CD14-positive monocyte (primary cell): ENCODE measurements at regions of chr9 and their contacts with region 1.

Region 1: DNA sequence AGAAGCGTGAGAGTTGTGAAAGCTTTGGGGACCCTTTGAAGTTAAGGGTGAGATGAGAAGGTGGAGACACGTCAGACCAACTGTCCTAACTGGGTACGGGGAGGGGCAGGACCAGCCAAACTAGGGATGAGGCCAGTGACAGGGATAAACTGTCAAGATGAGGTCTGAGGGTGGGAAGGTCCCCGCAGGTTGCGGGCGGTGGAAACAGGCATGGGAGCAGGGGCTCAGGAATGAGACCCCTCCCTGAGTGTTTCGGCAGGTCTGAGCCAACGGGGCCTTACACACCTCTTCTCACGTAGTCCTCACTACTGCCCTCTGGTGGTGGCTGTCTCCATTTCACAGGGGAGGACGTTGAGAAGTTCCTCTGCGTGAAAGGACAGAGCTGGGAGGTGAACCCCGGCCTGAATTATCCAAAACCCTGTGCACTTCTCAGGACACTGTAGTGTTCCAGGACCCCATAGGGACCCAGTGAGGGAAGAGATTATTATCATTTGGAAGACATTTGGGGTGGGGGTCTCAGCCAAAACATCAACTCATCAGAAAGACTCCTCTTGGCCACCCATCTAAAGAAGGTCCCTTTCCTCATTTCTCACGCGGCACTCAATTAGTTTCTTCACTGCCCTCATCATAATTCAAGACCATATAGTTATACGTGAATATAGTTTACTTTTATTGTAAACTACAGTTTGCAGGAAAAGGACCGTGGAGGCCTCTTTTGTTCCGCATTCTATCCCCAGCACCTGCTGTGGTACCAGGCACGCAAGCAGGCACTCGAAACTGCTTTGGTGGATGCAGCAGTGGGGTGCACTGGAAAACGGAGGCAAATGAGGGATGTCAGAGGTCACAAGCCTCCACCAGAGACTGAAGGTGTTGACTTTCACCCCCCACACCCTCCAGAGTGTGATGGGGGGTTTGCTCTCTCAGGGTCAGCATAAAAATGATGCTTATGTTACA is 21.7 kb upstream of the NANS start:
- DNase-seq: peak; percentile 76 to 84 (median 79)
- H3K4me3 ChIP-seq: no peak overlapping the region
- H3K4me3 Mint-ChIP-seq: peak overlapping the region; percentile 43 to 46
- H3K27ac ChIP-seq: no peak overlapping the region
- H3K27ac Mint-ChIP-seq: peak overlapping the region in 2 of 7 donors; percentile 26 to 80
- H3K4me1 ChIP-seq: peaks cover 4 to 6% of the 10 kb centered on the region in 2 donors
- H3K4me1 Mint-ChIP-seq: peaks cover 12% of the 10 kb centered on the region
- H3K27me3 ChIP-seq: no peaks in the 10 kb centered on the region
- H3K27me3 Mint-ChIP-seq: peaks cover 0 to 5% (median 2%) of the 10 kb centered on the region in 3 donors
- CTCF ChIP-seq: peak; percentile 91

Region 2: DNA sequence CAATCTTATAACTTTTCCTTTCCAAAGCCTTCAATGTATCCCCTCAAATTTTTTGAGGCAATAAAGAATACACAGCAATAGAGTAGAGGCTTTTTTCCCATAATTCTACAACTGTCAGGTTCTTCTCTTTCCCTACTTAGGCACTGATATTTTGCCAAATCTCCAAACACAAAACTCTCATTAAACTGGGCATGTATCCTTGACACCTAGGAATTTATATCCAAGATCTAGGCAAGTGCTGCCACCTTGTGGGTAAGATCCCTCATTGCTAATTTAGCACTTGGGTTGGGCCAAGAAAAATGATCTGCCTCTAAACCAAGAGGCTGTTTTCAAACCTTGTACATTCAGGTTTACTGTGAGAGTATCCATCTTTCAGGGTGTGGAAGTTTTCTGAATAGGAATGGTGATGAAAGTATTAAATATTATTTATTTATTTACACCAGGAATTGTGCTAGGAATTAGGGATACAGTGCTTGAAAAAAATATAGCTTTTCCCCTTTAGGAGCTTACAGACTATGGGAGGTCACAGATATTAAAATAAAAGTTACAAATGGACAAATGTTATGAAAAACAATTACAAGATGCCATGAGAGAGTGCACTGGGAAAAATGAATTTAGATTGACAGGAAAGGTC is 419.3 kb before region 1 on chr9:
- intact Hi-C with region 1: no loop called
- DNase-seq: peak; percentile 39 to 63 (median 58)
- H3K4me3 ChIP-seq: no peak overlapping the region
- H3K4me3 Mint-ChIP-seq: no peak overlapping the region
- H3K27ac ChIP-seq: no peak overlapping the region
- H3K27ac Mint-ChIP-seq: no peak overlapping the region
- H3K4me1 ChIP-seq: no peaks in the 10 kb centered on the region
- H3K4me1 Mint-ChIP-seq: peaks cover 3% of the 10 kb centered on the region
- H3K27me3 ChIP-seq: no peaks in the 10 kb centered on the region
- H3K27me3 Mint-ChIP-seq: peaks cover 0 to 2% (median 0%) of the 10 kb centered on the region in 3 donors
- CTCF ChIP-seq: peak; percentile 83

Region 3: GRCh38 chr9:97710356-97711222 is 324.3 kb before region 1 on chr9:
- intact Hi-C with region 1: loop called in 1 of 2 experiments (anchors 10 kb)
- DNase-seq: peak; percentile 48 to 65 (median 62)
- H3K4me3 ChIP-seq: no peak overlapping the region
- H3K4me3 Mint-ChIP-seq: peak overlapping the region in 1 of 2 donors; percentile 68
- H3K27ac ChIP-seq: no peak overlapping the region
- H3K27ac Mint-ChIP-seq: no peak overlapping the region
- H3K4me1 ChIP-seq: peaks cover 0 to 4% of the 10 kb centered on the region in 2 donors
- H3K4me1 Mint-ChIP-seq: peaks cover 7% of the 10 kb centered on the region
- H3K27me3 ChIP-seq: peaks cover 26 to 46% of the 10 kb centered on the region in 2 donors
- H3K27me3 Mint-ChIP-seq: peaks cover 21 to 57% (median 30%) of the 10 kb centered on the region in 3 donors
- CTCF ChIP-seq: peak; percentile 86

Region 4: GRCh38 chr9:97890038-97890437 is 144.8 kb before region 1 on chr9:
- intact Hi-C with region 1: loop called in 1 of 2 experiments (anchors 10 kb)
- DNase-seq: peak; percentile 46 to 59 (median 49)
- H3K4me3 ChIP-seq: no peak overlapping the region
- H3K4me3 Mint-ChIP-seq: no peak overlapping the region
- H3K27ac ChIP-seq: no peak overlapping the region
- H3K27ac Mint-ChIP-seq: no peak overlapping the region
- H3K4me1 ChIP-seq: no peaks in the 10 kb centered on the region
- H3K4me1 Mint-ChIP-seq: peaks cover 3% of the 10 kb centered on the region
- H3K27me3 ChIP-seq: no peaks in the 10 kb centered on the region
- H3K27me3 Mint-ChIP-seq: peaks cover 0 to 10% (median 4%) of the 10 kb centered on the region in 3 donors
- CTCF ChIP-seq: peak; percentile 85

Region 5: GRCh38 chr9:97990266-97990665 is 44.6 kb before region 1 on chr9:
- intact Hi-C with region 1: loop called in 1 of 2 experiments (anchors 5 kb)
- DNase-seq: no peak
- H3K4me3 ChIP-seq: no peak overlapping the region
- H3K4me3 Mint-ChIP-seq: no peak overlapping the region
- H3K27ac ChIP-seq: peak overlapping the region in 1 of 2 donors; percentile 55
- H3K27ac Mint-ChIP-seq: peak overlapping the region in 3 of 7 donors; percentile 48 to 57 (median 55)
- H3K4me1 ChIP-seq: peaks cover 31 to 60% of the 10 kb centered on the region in 2 donors
- H3K4me1 Mint-ChIP-seq: peaks cover 74% of the 10 kb centered on the region
- H3K27me3 ChIP-seq: no peaks in the 10 kb centered on the region
- H3K27me3 Mint-ChIP-seq: no peaks in the 10 kb centered on the region
- CTCF ChIP-seq: no peak

Region 6: DNA sequence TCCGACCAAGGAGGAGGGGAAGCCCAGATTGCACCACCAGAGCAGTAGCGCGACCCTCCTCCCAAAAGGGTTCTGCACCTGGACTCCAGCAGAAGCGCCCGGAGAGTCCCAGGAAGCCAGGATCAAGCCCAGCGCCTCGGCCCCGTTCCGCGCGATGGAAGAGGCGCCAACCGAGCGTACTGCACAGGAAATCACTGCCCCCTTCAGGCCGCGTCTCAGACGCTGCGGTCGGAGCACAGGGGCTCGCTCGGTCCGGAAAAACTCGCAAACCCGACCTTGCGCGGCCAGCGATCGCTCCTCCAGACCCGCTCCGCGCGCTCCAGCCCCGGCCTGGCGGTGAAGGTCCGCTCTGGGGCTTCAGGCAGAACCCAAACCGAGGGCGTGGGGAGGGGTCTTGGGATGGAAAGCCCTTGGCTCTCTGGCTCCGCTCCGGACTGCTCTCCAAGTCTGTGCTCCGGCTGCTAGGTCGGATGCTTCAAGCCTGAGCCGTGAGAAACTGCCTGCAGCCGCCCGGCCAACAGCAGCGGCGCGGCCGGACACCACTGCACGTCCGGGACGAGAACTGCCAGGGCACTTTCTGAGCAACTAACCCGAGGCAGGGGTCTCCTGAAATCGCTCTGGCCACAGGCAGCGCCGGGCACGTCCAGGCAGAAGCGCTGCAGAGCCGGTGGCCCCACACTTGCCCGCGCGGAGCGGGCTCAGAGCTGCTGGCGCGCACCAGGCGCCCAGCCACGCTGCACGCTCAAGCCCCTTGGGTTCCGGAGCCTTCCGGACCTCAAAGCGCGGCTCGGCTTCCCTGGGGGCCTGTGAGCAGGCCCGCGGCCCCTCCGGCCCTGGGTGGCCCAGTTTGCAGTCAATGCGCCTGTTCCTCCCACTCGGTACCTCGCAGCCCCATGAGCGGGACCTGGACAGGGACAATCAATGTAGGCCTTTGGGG is 672.6 kb after region 1 on chr9:
- intact Hi-C with region 1: no loop called
- DNase-seq: no peak
- H3K4me3 ChIP-seq: no peak overlapping the region
- H3K4me3 Mint-ChIP-seq: peak overlapping the region in 1 of 2 donors; percentile 82
- H3K27ac ChIP-seq: no peak overlapping the region
- H3K27ac Mint-ChIP-seq: no peak overlapping the region
- H3K4me1 ChIP-seq: peaks cover 0 to 7% of the 10 kb centered on the region in 2 donors
- H3K4me1 Mint-ChIP-seq: peaks cover 9% of the 10 kb centered on the region
- H3K27me3 ChIP-seq: peaks cover 48 to 79% of the 10 kb centered on the region in 2 donors
- H3K27me3 Mint-ChIP-seq: peaks cover 74 to 87% (median 77%) of the 10 kb centered on the region in 3 donors
- CTCF ChIP-seq: no peak